ENCODE measurements at regions of chr22 and their contacts with region 1.

Region 1: GRCh38 chr22:24146194-24146616 is 35.1 kb upstream of the SUSD2 start:
- DNase-seq: no peak
- H3K4me3 ChIP-seq: no peak overlapping the region
- H3K27ac ChIP-seq: no peak overlapping the region
- H3K4me1 ChIP-seq: peaks cover 33% of the 10 kb centered on the region
- H3K27me3 ChIP-seq: no peaks in the 10 kb centered on the region
- CTCF ChIP-seq: no peak

Region 2: DNA sequence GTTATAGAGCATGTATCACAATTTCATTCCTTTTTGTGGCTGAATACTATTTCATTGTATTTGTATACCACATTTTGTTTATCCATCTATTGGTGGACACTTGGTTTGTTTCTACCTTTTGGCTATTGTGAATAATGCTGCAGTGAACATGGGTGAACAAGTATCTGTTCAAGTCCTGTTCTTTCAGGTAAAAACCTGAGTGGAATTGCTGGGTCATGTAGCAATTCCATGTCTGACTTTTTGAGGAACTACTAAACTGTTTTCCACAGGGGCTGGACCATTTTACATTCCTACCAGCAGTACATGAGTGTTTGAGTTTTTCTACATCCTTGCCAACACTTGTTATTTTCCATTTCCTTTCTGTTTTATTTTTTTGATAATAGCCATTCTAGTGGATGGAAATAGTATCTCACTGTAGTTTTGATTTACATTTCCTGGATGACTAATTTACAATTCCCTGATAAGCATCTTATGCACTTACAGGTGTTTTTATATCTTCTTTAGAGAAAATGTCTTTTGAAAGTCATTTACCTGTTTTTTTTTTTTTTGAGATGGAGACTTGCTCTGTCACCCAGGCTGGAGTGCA is 122.9 kb before region 1 on chr22:
- CTCF ChIA-PET with region 1: interaction called, 33 read pairs
- dilution Hi-C with region 1: no loop called
- in situ Hi-C with region 1: no loop called
- intact Hi-C with region 1: no loop called
- DNase-seq: no peak
- H3K4me3 ChIP-seq: no peak overlapping the region
- H3K27ac ChIP-seq: no peak overlapping the region
- H3K4me1 ChIP-seq: no peaks in the 10 kb centered on the region
- H3K27me3 ChIP-seq: no peaks in the 10 kb centered on the region
- CTCF ChIP-seq: no peak

Region 3: DNA sequence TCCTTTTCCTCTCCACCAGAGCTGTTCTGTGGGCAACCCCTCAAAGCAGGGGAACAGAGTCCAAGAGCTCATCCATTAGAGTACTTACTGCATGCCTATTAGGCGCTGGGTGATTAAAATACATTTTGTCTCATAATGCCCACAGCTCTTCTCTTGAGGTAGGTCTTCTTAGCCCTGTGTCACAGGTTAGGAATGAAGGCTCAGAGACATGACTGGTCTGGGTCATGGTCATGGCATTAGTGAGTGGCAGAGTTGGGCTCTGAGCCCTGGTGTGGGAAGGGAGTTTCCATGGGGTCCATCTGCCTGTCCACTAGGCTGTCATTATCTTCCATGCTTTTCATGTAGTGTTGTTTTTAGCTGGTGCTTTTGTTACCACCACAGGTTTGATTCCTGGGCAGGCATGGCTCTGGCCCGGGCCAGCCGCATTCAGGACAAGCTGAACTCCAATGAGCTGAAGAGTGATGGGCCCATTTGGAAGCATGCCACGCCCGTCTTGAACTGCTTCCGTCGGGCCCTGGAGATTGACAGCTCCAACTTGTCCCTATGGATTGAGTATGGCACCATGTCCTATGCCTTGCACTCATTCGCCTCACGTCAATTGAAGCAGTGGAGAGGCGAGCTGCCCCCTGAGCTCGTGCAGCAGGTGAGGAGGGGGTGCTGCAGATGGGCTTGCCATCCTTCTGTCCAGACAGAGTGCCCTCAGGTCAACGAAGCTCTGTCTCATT is 59.0 kb before region 1 on chr22:
- CTCF ChIA-PET with region 1: no interaction called
- dilution Hi-C with region 1: no loop called
- in situ Hi-C with region 1: no loop called
- intact Hi-C with region 1: no loop called
- DNase-seq: no peak
- H3K4me3 ChIP-seq: no peak overlapping the region
- H3K27ac ChIP-seq: no peak overlapping the region
- H3K4me1 ChIP-seq: no peaks in the 10 kb centered on the region
- H3K27me3 ChIP-seq: no peaks in the 10 kb centered on the region
- CTCF ChIP-seq: no peak

Region 4: GRCh38 chr22:24112193-24112592 is 34.0 kb before region 1 on chr22:
- CTCF ChIA-PET with region 1: no interaction called
- dilution Hi-C with region 1: no loop called
- in situ Hi-C with region 1: no loop called
- intact Hi-C with region 1: loop called (anchors 5 kb)
- DNase-seq: peak; percentile 72
- H3K4me3 ChIP-seq: no peak overlapping the region
- H3K27ac ChIP-seq: no peak overlapping the region
- H3K4me1 ChIP-seq: peaks cover 6% of the 10 kb centered on the region
- H3K27me3 ChIP-seq: no peaks in the 10 kb centered on the region
- CTCF ChIP-seq: no peak

Region 5: DNA sequence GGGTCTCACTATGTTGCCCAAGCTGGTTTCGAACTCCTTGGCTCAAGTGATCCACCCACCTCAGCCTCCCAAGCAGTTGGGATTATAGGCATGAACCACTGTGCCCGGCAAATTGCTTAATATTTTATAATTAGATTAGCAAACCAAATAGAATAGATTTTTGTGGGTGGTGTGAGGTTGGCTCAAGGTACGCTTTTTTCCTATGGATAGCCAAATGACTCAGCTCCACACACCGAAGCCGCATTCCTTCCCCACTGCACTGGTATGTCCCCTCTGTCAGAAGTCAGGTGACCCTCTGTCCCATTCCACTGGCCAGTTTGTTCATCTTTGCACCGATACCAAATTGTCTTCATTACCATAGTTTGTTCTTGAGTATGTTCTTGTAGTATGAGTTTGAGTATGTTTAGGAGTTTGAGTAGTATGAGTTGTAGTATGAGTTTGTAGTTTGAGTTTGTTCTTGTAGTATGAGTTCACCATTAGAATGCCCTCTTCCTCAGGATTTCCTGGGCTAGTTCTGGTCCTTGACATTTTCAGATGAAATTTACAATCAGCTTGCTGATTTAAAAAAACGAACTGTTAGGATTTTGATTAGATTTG is 54.5 kb after region 1 on chr22:
- CTCF ChIA-PET with region 1: no interaction called
- dilution Hi-C with region 1: no loop called
- in situ Hi-C with region 1: no loop called
- intact Hi-C with region 1: no loop called
- DNase-seq: peak; percentile 74
- H3K4me3 ChIP-seq: no peak overlapping the region
- H3K27ac ChIP-seq: peak overlapping the region; percentile 78
- H3K4me1 ChIP-seq: peaks cover 29% of the 10 kb centered on the region
- H3K27me3 ChIP-seq: no peaks in the 10 kb centered on the region
- CTCF ChIP-seq: no peak

Measured in mammary epithelial cell (primary cell).